HEK293 (cell line): ENCODE measurements at regions of chr9 and their contacts with region 1.

Region 1: DNA sequence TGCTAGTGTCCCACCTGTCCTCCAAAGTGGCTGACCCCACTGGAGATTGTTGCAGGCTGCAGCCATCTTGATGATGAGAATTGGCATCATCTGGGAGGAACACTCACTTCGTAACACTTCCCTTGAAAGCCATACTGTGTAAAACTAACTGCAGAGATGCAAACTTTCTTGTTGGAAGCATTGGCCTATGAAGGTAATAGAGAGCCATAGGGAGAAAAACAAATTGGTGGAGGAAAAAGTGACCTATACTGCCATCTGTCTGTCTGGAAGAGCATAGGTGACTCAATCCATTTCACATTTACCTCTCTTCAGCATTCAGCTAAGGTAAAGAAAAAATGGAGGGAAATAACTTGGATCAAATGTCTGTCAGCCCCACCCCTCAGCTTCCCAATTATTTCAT is 473.4 kb downstream of the NTRK2 start:
- H3K4me3 ChIP-seq: no peak overlapping the region
- H3K27ac ChIP-seq: no peak overlapping the region
- H3K4me1 ChIP-seq: no peaks in the 10 kb centered on the region
- CTCF ChIP-seq: no peak

Region 2: DNA sequence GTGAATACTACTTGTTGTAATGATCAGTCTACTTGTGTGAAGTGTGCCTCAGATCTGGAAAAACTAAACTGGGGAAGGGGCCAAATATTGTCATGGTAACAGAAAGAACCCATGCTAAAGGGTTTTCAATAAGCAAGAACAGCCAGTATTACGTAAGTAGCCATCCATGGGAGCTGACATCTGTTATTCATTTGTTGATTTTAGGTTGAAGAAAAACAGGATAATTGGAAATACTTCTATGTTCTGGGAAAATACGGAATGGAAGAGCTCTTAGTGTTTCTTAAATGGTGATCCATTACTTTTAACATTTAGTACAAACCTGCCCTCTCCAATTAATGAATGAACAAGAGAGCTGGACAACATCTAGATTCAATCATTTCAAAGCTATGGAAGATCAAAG is 12.4 kb after region 1 on chr9:
- CTCF ChIA-PET with region 1: interaction called, 10 read pairs
- POLR2A ChIA-PET with region 1: no interaction called
- H3K4me3 ChIP-seq: no peak overlapping the region
- H3K27ac ChIP-seq: no peak overlapping the region
- H3K4me1 ChIP-seq: peaks cover 15% of the 10 kb centered on the region
- CTCF ChIP-seq: no peak